ENCODE measurements at regions of chr3 and their contacts with region 1.

Region 1: GRCh38 chr3:39021029-39021428 is 30.7 kb downstream of the SCN11A start:
- DNase-seq: no peak
- ATAC-seq: no peak

Region 2: GRCh38 chr3:38994251-38994650 is 26.8 kb before region 1 on chr3:
- intact Hi-C with region 1: loop called (anchors 2 kb)
- DNase-seq: no peak
- ATAC-seq: no peak

Region 3: GRCh38 chr3:39260957-39261356 is 239.9 kb after region 1 on chr3:
- intact Hi-C with region 1: no loop called
- DNase-seq: peak; percentile 86
- ATAC-seq: peak; percentile 99

Measured in sciatic nerve (tissue), 2 donors.